Activated CD4-positive, alpha-beta T cell treated with anti-CD3 and anti-CD28 coated beads for 36 hours (primary cell): ENCODE measurements at regions of chr9 and their contacts with region 1.

Region 1: DNA sequence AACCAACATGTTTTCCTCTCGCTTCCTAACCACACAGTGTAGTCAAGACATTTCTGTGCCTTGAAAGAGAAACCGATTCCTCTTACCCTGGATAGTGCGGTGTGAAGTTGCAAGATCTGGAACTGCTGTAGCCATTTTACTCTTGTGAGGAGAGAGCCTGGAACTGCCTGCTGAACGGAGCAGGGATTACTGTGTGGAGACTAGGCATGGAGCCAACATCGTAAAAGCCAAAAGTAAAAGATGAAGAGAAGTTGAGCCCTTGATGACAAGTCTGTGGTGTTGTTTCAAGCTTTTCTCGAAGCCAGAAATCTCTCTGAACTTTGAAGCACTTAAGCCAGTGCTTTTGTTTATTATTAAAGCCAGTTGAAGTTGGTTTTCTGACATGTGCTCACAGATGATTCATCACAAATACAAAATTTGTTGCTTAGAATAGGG is 110.1 kb upstream of the GRIN3A start:
- DNase-seq: no peak
- ATAC-seq: no peak
- H3K4me3 Mint-ChIP-seq: no peak overlapping the region
- H3K27ac Mint-ChIP-seq: no peak overlapping the region
- H3K4me1 Mint-ChIP-seq: no peaks in the 10 kb centered on the region
- H3K27me3 Mint-ChIP-seq: peaks cover 3% of the 10 kb centered on the region

Region 2: GRCh38 chr9:102032614-102033013 is 184.1 kb after region 1 on chr9:
- CTCF ChIA-PET with region 1: no interaction called
- POLR2A ChIA-PET with region 1: interaction called, 10 read pairs
- intact Hi-C with region 1: no loop called
- DNase-seq: no peak
- ATAC-seq: no peak
- H3K4me3 Mint-ChIP-seq: no peak overlapping the region
- H3K27ac Mint-ChIP-seq: no peak overlapping the region
- H3K4me1 Mint-ChIP-seq: no peaks in the 10 kb centered on the region
- H3K27me3 Mint-ChIP-seq: no peaks in the 10 kb centered on the region

Region 3: DNA sequence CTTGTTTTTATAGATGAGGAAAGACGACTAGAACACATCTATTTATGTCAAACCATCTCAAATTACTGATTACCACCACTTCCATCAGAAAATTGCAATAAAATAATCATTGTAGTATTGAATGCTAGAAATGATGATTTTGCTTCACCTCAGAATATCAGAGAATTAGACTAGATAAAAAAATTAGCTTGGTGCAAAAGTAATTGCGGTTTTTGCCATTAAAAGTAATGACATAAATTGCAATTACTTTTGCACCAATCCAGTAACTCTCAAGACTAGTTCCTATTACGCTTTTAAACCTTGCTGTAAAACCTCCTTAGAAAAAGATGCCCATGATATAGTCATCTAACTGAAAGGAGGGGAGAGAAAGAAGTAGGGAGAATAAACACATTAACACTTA is 446.7 kb after region 1 on chr9:
- CTCF ChIA-PET with region 1: no interaction called
- POLR2A ChIA-PET with region 1: no interaction called
- intact Hi-C with region 1: no loop called
- DNase-seq: no peak
- ATAC-seq: no peak
- H3K4me3 Mint-ChIP-seq: no peak overlapping the region
- H3K27ac Mint-ChIP-seq: no peak overlapping the region
- H3K4me1 Mint-ChIP-seq: no peaks in the 10 kb centered on the region
- H3K27me3 Mint-ChIP-seq: no peaks in the 10 kb centered on the region